Testis (tissue), 5 donors: ENCODE measurements at regions of chr13 and their contacts with region 1.

Region 1: DNA sequence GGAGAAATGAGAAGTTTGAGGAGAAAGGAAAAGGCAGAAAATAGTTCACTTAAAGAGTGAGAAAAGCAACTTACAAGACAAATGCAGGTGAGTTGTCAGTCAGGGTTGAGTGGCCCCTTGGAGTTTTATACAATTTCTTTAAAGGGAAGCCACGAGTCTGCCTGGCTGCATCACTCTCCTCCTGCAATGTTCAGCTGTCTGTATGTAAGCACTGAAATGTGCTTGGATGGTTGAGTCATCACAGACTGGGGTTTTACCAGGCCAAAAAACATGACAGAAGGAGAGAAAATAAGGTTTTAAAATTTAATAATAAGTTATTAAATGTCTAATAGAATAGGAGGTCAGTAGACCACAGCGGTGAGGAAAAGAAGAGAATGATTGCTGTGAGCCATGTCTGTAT is 51.0 kb upstream of the FGF14 start:
- DNase-seq: no peak
- H3K4me3 ChIP-seq: no peak overlapping the region
- H3K27ac ChIP-seq: no peak overlapping the region
- H3K4me1 ChIP-seq: no peaks in the 10 kb centered on the region
- H3K27me3 ChIP-seq: no peaks in the 10 kb centered on the region
- CTCF ChIP-seq: no peak
- POLR2A ChIP-seq: no peak

Region 2: DNA sequence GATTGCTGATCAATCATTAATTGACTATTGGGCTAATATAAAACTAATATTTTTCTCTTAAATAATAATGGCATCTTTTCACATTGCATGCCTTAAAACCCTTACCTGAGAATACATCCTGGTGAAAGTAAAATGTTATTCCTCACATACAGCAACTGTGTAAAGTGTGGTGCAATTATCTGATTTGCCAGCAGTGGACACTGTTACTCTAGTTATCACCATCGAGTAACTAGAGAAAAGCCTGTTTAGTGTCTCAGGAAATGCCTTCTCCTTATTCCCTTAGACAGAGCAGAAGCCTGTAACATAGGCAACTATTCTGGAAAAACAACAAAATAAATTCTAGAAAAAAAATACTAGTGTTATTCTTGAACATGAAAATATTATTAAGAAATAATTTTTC is 510.8 kb before region 1 on chr13:
- intact Hi-C with region 1: loop called (anchors 10 kb)
- DNase-seq: peak; percentile 54
- H3K4me3 ChIP-seq: no peak overlapping the region
- H3K27ac ChIP-seq: no peak overlapping the region
- H3K4me1 ChIP-seq: no peaks in the 10 kb centered on the region
- H3K27me3 ChIP-seq: no peaks in the 10 kb centered on the region
- CTCF ChIP-seq: peak; percentile 46 to 70 (median 63)
- POLR2A ChIP-seq: no peak

Region 3: GRCh38 chr13:102255409-102255808 is 197.4 kb before region 1 on chr13:
- intact Hi-C with region 1: no loop called
- DNase-seq: no peak
- H3K4me3 ChIP-seq: no peak overlapping the region
- H3K27ac ChIP-seq: no peak overlapping the region
- H3K4me1 ChIP-seq: no peaks in the 10 kb centered on the region
- H3K27me3 ChIP-seq: no peaks in the 10 kb centered on the region
- CTCF ChIP-seq: no peak
- POLR2A ChIP-seq: no peak